Endothelial cell of umbilical vein (primary cell): ENCODE measurements at regions of chr9 and their contacts with region 1.

Region 1: GRCh38 chr9:98775831-98776441 is 20.4 kb downstream of the ANKS6 start:
- DNase-seq: peak; percentile 68
- H3K4me3 ChIP-seq: no peak overlapping the region
- H3K27ac ChIP-seq: no peak overlapping the region
- H3K4me1 ChIP-seq: peaks cover 10% of the 10 kb centered on the region
- H3K27me3 ChIP-seq: no peaks in the 10 kb centered on the region
- CTCF ChIP-seq: peak; percentile 77 to 83
- POLR2A ChIP-seq: no peak

Region 2: GRCh38 chr9:98255578-98256296 is 520.2 kb before region 1 on chr9 and contains the start of gene TBC1D2:
- CTCF ChIA-PET with region 1: interaction called, 15 read pairs
- POLR2A ChIA-PET with region 1: no interaction called
- dilution Hi-C with region 1: no loop called
- intact Hi-C with region 1: no loop called
- DNase-seq: peak; percentile 94
- H3K4me3 ChIP-seq: peak within 1 kb of the TSS; percentile 67 to 81 (median 80)
- H3K27ac ChIP-seq: peak within 1 kb of the TSS; percentile 75
- H3K4me1 ChIP-seq: peaks cover 22% of the 10 kb centered on the region
- H3K27me3 ChIP-seq: no peaks in the 10 kb centered on the region
- CTCF ChIP-seq: peak in 1 of 2 donors; percentile 24
- POLR2A ChIP-seq: peak; percentile 64
- total RNA-seq, gene TBC1D2: 3.4 and 3.6 TPM in 2 replicates

Region 3: GRCh38 chr9:98315551-98316060 is 460.3 kb before region 1 on chr9:
- CTCF ChIA-PET with region 1: interaction called, 143 read pairs
- POLR2A ChIA-PET with region 1: no interaction called
- dilution Hi-C with region 1: no loop called
- intact Hi-C with region 1: loop called (anchors 1 kb)
- DNase-seq: peak; percentile 82
- H3K4me3 ChIP-seq: no peak overlapping the region
- H3K27ac ChIP-seq: no peak overlapping the region
- H3K4me1 ChIP-seq: peaks cover 16% of the 10 kb centered on the region
- H3K27me3 ChIP-seq: no peaks in the 10 kb centered on the region
- CTCF ChIP-seq: peak; percentile 91 to 93
- POLR2A ChIP-seq: no peak

Region 4: DNA sequence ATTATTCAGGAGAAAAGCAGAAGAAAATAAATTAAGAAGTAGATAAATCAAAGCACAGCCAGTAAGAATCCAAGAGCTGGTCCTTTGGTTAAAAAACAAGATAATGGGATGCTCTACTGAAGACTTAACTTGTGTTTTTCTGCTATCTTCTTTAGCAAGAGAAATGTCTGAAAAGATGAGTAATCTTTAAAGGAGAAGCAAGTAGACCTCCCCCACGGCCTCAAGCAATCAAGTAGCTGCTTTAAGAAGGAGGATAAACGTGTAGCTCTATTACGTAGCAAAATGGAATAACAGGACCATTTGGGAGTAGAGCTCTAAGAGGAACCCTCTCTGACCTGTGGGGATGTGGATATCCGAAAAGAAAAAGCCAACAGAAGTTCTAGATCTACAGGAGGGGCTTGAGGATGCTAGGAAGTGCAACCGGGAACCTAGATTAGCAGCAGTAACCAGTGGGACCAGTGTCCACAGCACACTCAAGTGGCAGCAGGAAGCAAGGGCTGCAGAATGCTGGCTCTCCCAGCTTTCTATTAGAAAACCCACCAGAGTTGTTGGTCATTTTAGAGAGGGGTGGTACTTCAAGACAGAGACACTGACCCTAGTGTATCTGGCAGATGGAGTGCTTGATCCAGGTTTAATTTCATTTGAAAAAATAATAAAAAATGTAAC is 252.6 kb before region 1 on chr9:
- CTCF ChIA-PET with region 1: interaction called, 18 read pairs
- POLR2A ChIA-PET with region 1: no interaction called
- dilution Hi-C with region 1: no loop called
- intact Hi-C with region 1: no loop called
- DNase-seq: peak; percentile 30
- H3K4me3 ChIP-seq: no peak overlapping the region
- H3K27ac ChIP-seq: peak overlapping the region; percentile 60
- H3K4me1 ChIP-seq: peaks cover 34% of the 10 kb centered on the region
- H3K27me3 ChIP-seq: no peaks in the 10 kb centered on the region
- CTCF ChIP-seq: peak; percentile 17 to 45
- POLR2A ChIP-seq: no peak

Region 5: GRCh38 chr9:98707166-98708102 is 68.5 kb before region 1 on chr9:
- CTCF ChIA-PET with region 1: interaction called, 11 read pairs
- POLR2A ChIA-PET with region 1: no interaction called
- dilution Hi-C with region 1: no loop called
- intact Hi-C with region 1: loop called (anchors 2 kb)
- DNase-seq: peak; percentile 77
- H3K4me3 ChIP-seq: peak overlapping the region; percentile 28 to 82 (median 48)
- H3K27ac ChIP-seq: no peak overlapping the region
- H3K4me1 ChIP-seq: peaks cover 12% of the 10 kb centered on the region
- H3K27me3 ChIP-seq: peaks cover 2 to 11% of the 10 kb centered on the region in 2 experiments
- CTCF ChIP-seq: peak; percentile 72 to 84
- POLR2A ChIP-seq: no peak

Region 6: GRCh38 chr9:98791147-98792095 is 15.5 kb after region 1 on chr9:
- CTCF ChIA-PET with region 1: interaction called, 13 read pairs
- POLR2A ChIA-PET with region 1: interaction called, 6 read pairs
- dilution Hi-C with region 1: no loop called
- intact Hi-C with region 1: no loop called
- DNase-seq: peak; percentile 80
- H3K4me3 ChIP-seq: no peak overlapping the region
- H3K27ac ChIP-seq: no peak overlapping the region
- H3K4me1 ChIP-seq: peaks cover 16% of the 10 kb centered on the region
- H3K27me3 ChIP-seq: no peaks in the 10 kb centered on the region
- CTCF ChIP-seq: peak; percentile 96 to 98
- POLR2A ChIP-seq: no peak

Region 7: GRCh38 chr9:99076483-99077171 is 300.7 kb after region 1 on chr9:
- CTCF ChIA-PET with region 1: no interaction called
- POLR2A ChIA-PET with region 1: no interaction called
- dilution Hi-C with region 1: no loop called
- intact Hi-C with region 1: no loop called
- DNase-seq: no peak
- H3K4me3 ChIP-seq: no peak overlapping the region
- H3K27ac ChIP-seq: no peak overlapping the region
- H3K4me1 ChIP-seq: no peaks in the 10 kb centered on the region
- H3K27me3 ChIP-seq: no peaks in the 10 kb centered on the region
- CTCF ChIP-seq: no peak
- POLR2A ChIP-seq: no peak